Left ventricle myocardium superior (tissue), 1 donor: ENCODE measurements at regions of chr14 and their contacts with region 1.

Region 1: GRCh38 chr14:64879635-64880220 is at the start of gene SPTB:
- DNase-seq: peak; percentile 88
- ATAC-seq: peak; percentile 93
- total RNA-seq, gene SPTB: 93.1 TPM

Region 2: DNA sequence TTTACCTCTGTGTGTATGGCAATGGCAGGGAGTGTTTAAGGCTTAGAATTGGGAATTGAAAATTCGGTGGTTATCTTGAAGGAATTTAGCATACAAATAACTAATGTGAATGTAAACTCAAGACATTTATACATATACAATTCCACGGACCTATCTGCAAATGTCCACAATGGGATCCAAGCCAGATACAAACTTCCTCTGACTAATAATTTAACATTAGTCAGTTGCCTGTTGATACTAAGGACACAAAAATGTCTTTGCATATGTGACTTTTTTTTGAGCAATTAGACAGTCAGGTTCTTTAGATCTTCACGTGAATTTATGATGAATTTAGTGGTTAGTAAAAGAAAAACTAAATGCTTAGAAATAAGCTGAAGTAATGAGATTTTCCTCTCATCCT is 626.1 kb before region 1 on chr14:
- intact Hi-C with region 1: no loop called
- DNase-seq: no peak
- ATAC-seq: no peak

Region 3: DNA sequence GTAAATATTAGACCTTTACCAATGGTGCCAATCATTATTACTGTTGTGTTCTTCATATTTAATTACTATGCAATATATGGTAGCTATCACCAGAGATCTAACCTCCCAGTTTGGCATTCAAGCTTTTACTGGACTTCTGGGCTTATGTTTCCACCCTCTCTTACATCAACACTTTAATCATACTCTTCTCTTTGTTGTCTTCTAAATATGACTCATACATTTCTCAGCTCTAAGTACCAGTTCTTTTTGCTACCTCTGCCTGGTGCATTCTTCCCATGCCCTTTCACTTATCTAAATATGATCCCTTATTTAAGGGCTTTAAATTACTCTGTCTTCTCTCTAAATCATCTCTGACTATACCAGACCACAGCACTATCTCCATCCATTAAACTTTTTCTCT is 1360.4 kb after region 1 on chr14:
- intact Hi-C with region 1: loop called (anchors 10 kb)
- DNase-seq: no peak
- ATAC-seq: no peak